CD4-positive, alpha-beta memory T cell (primary cell): ENCODE measurements at regions of chr19 and their contacts with region 1.

Region 1: GRCh38 chr19:11374433-11375142 is at the start of gene SWSAP1:
- DNase-seq: peak; percentile 98 to 100 (median 99)
- H3K4me3 ChIP-seq: peak within 1 kb of the TSS; percentile 57 to 77
- H3K4me3 Mint-ChIP-seq: no peak within 1 kb of the TSS
- H3K27ac ChIP-seq: peak within 1 kb of the TSS; percentile 84
- H3K27ac Mint-ChIP-seq: peak within 1 kb of the TSS in 1 of 7 donors; percentile 79
- H3K4me1 ChIP-seq: peaks cover 36% of the 10 kb centered on the region
- H3K4me1 Mint-ChIP-seq: peaks cover 7 to 17% (median 11%) of the 10 kb centered on the region in 4 donors
- H3K27me3 ChIP-seq: no peaks in the 10 kb centered on the region
- H3K27me3 Mint-ChIP-seq: no peaks in the 10 kb centered on the region
- total RNA-seq, gene SWSAP1: 4.0 to 4.8 TPM

Region 2: DNA sequence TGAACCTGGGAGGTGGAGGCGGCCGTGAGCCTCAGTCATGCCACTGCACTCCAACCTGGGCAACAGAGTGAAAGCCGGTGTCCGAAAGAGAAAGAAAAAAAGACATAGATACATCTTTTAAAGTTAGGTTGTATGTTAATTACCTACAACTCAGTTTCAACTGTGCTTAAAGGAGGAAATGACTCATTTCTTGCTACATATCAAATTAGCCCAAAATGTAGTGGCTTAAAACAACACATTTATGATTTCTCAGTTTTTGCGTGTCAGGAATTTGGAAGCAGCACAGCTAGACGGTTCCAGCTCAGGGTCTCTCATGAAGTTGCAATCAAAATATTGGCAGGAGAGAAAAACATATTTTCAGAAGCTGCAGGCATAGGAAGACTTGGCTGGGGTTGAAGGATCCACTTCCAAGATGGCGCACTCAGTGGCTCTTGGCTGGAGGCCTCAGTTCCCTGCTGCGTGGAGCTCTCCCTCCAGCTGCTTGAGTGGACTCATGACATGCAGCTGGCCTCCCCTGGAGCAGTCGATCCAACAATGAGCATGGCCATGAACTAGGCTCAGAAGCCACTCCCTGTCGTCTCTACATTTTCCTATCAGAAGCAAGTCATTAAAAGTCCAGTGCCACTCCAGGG is 278.3 kb before region 1 on chr19:
- CTCF ChIA-PET with region 1: no interaction called
- POLR2A ChIA-PET with region 1: interaction called, 14 read pairs
- intact Hi-C with region 1: no loop called
- DNase-seq: peak; percentile 31 to 71 (median 38)
- H3K4me3 ChIP-seq: peak overlapping the region in 1 of 2 donors; percentile 32
- H3K4me3 Mint-ChIP-seq: peak overlapping the region; percentile 46 to 91 (median 76)
- H3K27ac ChIP-seq: peak overlapping the region; percentile 89
- H3K27ac Mint-ChIP-seq: peak overlapping the region; percentile 92 to 100 (median 97)
- H3K4me1 ChIP-seq: peaks cover 65% of the 10 kb centered on the region
- H3K4me1 Mint-ChIP-seq: peaks cover 31 to 62% (median 45%) of the 10 kb centered on the region in 4 donors
- H3K27me3 ChIP-seq: no peaks in the 10 kb centered on the region
- H3K27me3 Mint-ChIP-seq: no peaks in the 10 kb centered on the region

Region 3: DNA sequence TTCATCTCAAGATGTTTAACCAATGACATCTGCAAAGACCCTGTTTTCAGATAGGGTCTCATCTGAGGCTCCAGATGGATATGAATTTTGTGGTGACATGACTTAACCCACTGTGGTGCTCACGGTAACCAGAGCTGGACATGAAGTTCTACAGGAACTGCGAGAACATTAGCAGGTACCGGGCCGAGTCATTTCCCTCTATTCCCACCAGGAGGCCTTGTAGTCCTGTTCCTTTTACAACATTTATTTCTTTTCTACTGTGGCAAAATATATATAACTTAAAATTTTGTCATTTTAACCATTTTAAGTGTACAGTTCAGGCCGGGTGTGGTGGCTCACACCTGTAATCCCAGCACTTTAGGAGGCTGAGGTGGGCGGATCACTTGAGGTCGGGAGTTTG is 86.2 kb before region 1 on chr19:
- CTCF ChIA-PET with region 1: no interaction called
- POLR2A ChIA-PET with region 1: no interaction called
- intact Hi-C with region 1: no loop called
- DNase-seq: no peak
- H3K4me3 ChIP-seq: no peak overlapping the region
- H3K4me3 Mint-ChIP-seq: no peak overlapping the region
- H3K27ac ChIP-seq: no peak overlapping the region
- H3K27ac Mint-ChIP-seq: no peak overlapping the region
- H3K4me1 ChIP-seq: peaks cover 1% of the 10 kb centered on the region
- H3K4me1 Mint-ChIP-seq: peaks cover 0 to 1% (median 0%) of the 10 kb centered on the region in 4 donors
- H3K27me3 ChIP-seq: no peaks in the 10 kb centered on the region
- H3K27me3 Mint-ChIP-seq: peaks cover 15% of the 10 kb centered on the region in 2 donors

Region 4: GRCh38 chr19:11339254-11340098 is 35.1 kb before region 1 on chr19 and contains the start of gene RAB3D:
- CTCF ChIA-PET with region 1: no interaction called
- POLR2A ChIA-PET with region 1: interaction called, 54 read pairs
- intact Hi-C with region 1: no loop called
- DNase-seq: peak; percentile 52 to 73 (median 57)
- H3K4me3 ChIP-seq: peak within 1 kb of the TSS; percentile 44 to 54
- H3K4me3 Mint-ChIP-seq: peak within 1 kb of the TSS; percentile 76 to 87 (median 82)
- H3K27ac ChIP-seq: peak within 1 kb of the TSS; percentile 33
- H3K27ac Mint-ChIP-seq: peak within 1 kb of the TSS; percentile 3 to 88 (median 71)
- H3K4me1 ChIP-seq: peaks cover 30% of the 10 kb centered on the region
- H3K4me1 Mint-ChIP-seq: peaks cover 16 to 35% (median 27%) of the 10 kb centered on the region in 4 donors
- H3K27me3 ChIP-seq: no peaks in the 10 kb centered on the region
- H3K27me3 Mint-ChIP-seq: no peaks in the 10 kb centered on the region
- total RNA-seq, gene RAB3D: 6.0 to 8.6 TPM

Region 5: GRCh38 chr19:11422163-11423021 is 47.8 kb after region 1 on chr19:
- CTCF ChIA-PET with region 1: no interaction called
- POLR2A ChIA-PET with region 1: interaction called, 11 read pairs
- intact Hi-C with region 1: no loop called
- DNase-seq: peak; percentile 57 to 76 (median 66)
- H3K4me3 ChIP-seq: peak overlapping the region in 1 of 2 donors; percentile 37
- H3K4me3 Mint-ChIP-seq: peak overlapping the region; percentile 72 to 89 (median 82)
- H3K27ac ChIP-seq: no peak overlapping the region
- H3K27ac Mint-ChIP-seq: peak overlapping the region in 5 of 7 donors; percentile 23 to 78 (median 54)
- H3K4me1 ChIP-seq: peaks cover 49% of the 10 kb centered on the region
- H3K4me1 Mint-ChIP-seq: peaks cover 15 to 47% (median 36%) of the 10 kb centered on the region in 4 donors
- H3K27me3 ChIP-seq: peaks cover 43% of the 10 kb centered on the region
- H3K27me3 Mint-ChIP-seq: peaks cover 39 to 45% of the 10 kb centered on the region in 2 donors

Region 6: GRCh38 chr19:11482384-11483050 is 107.9 kb after region 1 on chr19:
- CTCF ChIA-PET with region 1: interaction called, 14 read pairs
- POLR2A ChIA-PET with region 1: interaction called, 22 read pairs
- intact Hi-C with region 1: no loop called
- DNase-seq: peak; percentile 79 to 88 (median 85)
- H3K4me3 ChIP-seq: peak overlapping the region in 1 of 2 donors; percentile 35
- H3K4me3 Mint-ChIP-seq: peak overlapping the region; percentile 58 to 75 (median 70)
- H3K27ac ChIP-seq: no peak overlapping the region
- H3K27ac Mint-ChIP-seq: peak overlapping the region in 6 of 7 donors; percentile 8 to 89 (median 74)
- H3K4me1 ChIP-seq: peaks cover 24% of the 10 kb centered on the region
- H3K4me1 Mint-ChIP-seq: peaks cover 8 to 37% (median 20%) of the 10 kb centered on the region in 4 donors
- H3K27me3 ChIP-seq: peaks cover 12% of the 10 kb centered on the region
- H3K27me3 Mint-ChIP-seq: peaks cover 18 to 23% of the 10 kb centered on the region in 2 donors

Region 7: GRCh38 chr19:11528551-11529341 is 154.2 kb after region 1 on chr19 and contains the start of gene ECSIT:
- CTCF ChIA-PET with region 1: no interaction called
- POLR2A ChIA-PET with region 1: interaction called, 20 read pairs
- intact Hi-C with region 1: no loop called
- DNase-seq: peak; percentile 90 to 95 (median 92)
- H3K4me3 ChIP-seq: peak within 1 kb of the TSS; percentile 70 to 83
- H3K4me3 Mint-ChIP-seq: peak within 1 kb of the TSS; percentile 94 to 99 (median 98)
- H3K27ac ChIP-seq: peak within 1 kb of the TSS; percentile 76
- H3K27ac Mint-ChIP-seq: peak within 1 kb of the TSS; percentile 91 to 98 (median 97)
- H3K4me1 ChIP-seq: peaks cover 15% of the 10 kb centered on the region
- H3K4me1 Mint-ChIP-seq: peaks cover 13 to 21% (median 18%) of the 10 kb centered on the region in 4 donors
- H3K27me3 ChIP-seq: no peaks in the 10 kb centered on the region
- H3K27me3 Mint-ChIP-seq: no peaks in the 10 kb centered on the region
- total RNA-seq, gene ECSIT: 39.5 to 46.2 TPM